ENCODE measurements at regions of chr22 and their contacts with region 1.

Region 1: DNA sequence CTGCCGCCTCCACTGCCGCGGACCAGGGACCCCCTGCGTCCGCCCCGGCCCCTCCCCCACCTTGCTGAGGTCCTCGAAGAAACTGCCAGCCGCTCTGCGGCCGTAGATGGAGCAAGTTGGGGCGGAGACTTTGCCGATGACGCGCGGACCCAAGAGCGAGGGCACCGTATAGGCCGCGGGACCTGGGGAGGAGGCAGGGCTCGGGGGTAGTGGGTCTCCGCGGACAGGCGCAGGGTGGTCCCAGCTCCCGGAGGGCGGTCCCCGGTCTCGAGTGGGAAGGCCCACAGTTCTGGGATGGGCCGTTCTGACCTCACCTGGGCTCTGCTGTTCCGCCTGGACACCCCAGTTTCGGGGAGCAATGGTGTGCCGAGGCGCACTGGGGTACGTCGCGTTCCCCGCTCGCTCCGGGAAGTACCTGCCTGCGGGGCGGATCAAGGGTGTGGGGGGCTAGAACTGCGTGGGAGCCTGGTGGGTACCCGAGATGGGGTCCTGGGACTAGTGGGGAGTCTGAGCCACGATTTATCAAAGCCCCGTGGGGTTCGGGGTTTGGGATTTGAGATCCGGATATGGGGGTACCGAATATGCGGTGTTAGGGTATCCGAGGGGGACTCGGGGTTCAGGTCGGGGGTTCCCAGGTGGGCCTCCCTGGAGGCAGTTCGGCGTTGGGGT is 1.2 kb upstream of the TYMP start:
- DNase-seq: peak; percentile 92
- H3K4me3 Mint-ChIP-seq: peak overlapping the region; percentile 92
- H3K27ac Mint-ChIP-seq: peak overlapping the region; percentile 99
- H3K4me1 Mint-ChIP-seq: peaks cover 54% of the 10 kb centered on the region
- H3K27me3 Mint-ChIP-seq: no peaks in the 10 kb centered on the region

Region 2: DNA sequence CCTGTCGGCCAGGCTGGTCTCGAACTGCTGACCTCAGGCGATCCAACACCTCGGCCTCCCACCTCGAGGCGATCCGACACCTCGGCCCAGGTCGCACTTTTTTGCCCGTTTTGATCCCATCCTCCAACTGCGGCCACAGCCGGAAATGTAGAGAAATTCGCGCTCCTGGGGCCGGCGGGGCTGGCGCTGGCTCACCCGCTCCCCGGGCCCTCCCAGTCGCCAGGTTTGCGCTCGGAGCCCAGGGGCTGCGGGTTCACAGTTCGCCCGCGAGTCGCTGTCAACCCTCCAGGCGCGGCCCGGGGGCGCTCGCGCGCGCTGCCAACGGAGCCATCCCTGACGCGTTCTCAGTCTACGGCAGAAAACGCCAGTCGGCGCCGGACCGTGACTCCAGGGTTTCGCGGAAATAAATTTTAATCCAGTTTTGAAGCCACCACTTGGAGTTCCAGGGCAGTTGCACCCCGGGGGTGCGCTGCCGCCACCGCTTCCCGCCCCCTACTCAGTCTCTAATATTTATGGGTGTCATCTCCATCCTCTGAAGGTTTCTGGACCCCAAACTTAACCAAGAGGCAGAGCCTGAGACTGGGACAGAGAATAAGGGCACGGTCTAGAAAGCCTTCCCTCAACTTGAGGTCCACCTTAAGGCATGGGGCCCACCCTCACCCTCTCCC is 13.2 kb after region 1 on chr22:
- CTCF ChIA-PET with region 1: interaction called, 88 read pairs
- POLR2A ChIA-PET with region 1: interaction called, 139 read pairs
- intact Hi-C with region 1: loop called (anchors 1 kb)
- DNase-seq: peak; percentile 92
- H3K4me3 Mint-ChIP-seq: peak overlapping the region; percentile 59
- H3K27ac Mint-ChIP-seq: peak overlapping the region; percentile 76
- H3K4me1 Mint-ChIP-seq: peaks cover 57% of the 10 kb centered on the region
- H3K27me3 Mint-ChIP-seq: no peaks in the 10 kb centered on the region

Region 3: GRCh38 chr22:50582562-50583293 is 51.7 kb after region 1 on chr22 and contains the start of gene CHKB:
- CTCF ChIA-PET with region 1: interaction called, 17 read pairs
- POLR2A ChIA-PET with region 1: interaction called, 13 read pairs
- intact Hi-C with region 1: loop called (anchors 2 kb)
- DNase-seq: peak; percentile 99
- H3K4me3 Mint-ChIP-seq: peak within 1 kb of the TSS; percentile 94
- H3K27ac Mint-ChIP-seq: peak within 1 kb of the TSS; percentile 87
- H3K4me1 Mint-ChIP-seq: peaks cover 21% of the 10 kb centered on the region
- H3K27me3 Mint-ChIP-seq: no peaks in the 10 kb centered on the region
- total RNA-seq, gene CHKB: 76.2 to 76.3 TPM